ENCODE measurements at regions of chr12 and their contacts with region 1.

Region 1: DNA sequence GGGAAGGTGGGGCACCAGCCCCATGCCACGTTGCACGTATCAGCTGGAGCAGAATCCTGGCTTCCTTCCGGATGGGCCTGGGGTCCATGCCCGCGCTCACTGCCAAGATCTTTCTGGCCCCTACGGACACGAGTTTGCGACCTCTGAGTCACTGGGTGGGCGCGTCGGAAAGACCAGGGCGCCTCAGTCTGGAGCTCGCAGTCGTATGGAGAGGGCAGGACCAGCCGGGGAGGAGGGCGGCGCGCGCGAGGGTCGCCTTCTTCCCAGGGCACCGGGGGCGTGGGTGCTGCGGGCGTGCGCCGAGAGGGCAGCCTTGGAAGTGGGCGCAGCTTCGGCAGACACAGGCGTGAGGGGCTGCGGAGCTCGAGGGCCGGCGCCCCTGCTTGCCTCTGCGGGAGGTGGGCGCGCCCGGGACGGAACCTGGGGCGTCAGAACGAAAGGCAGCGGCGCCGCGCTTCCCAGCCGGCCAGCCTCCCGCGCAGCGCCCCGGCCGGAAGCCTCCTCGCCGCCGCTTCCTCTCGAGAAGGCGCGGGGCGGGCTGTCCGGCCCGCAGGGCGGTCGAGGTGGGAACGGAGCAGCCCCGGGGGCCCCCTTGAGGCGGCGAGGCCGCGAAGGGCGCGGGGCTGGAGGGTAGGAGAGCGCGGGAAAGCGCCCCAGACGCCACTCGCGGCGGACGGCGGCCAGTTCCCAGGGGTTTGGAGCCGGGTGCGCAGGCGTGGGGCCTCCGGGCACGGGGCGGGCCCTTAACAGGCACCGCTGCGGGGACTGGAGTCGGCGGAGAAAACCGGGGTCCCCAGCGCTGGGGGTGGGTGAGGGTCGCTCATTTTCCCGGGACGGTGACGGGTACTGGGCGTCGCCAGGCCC is at the start of gene ARL6IP4:
- DNase-seq: peak; percentile 73 to 82 (median 80)
- ATAC-seq: peak; percentile 86
- H3K4me3 ChIP-seq: peak within 1 kb of the TSS; percentile 95
- H3K4me1 ChIP-seq: peaks cover 36% of the 10 kb centered on the region
- CTCF ChIP-seq: no peak
- total RNA-seq, gene ARL6IP4: 127 to 171 (median 128) TPM

Region 2: GRCh38 chr12:123075646-123076171 is 95.3 kb after region 1 on chr12:
- intact Hi-C with region 1: no loop called
- DNase-seq: peak in 2 of 3 donors; percentile 49 to 76
- ATAC-seq: peak; percentile 80
- H3K4me3 ChIP-seq: no peak overlapping the region
- H3K4me1 ChIP-seq: peaks cover 5% of the 10 kb centered on the region
- CTCF ChIP-seq: no peak

Region 3: GRCh38 chr12:123141615-123142517 is 161.5 kb after region 1 on chr12:
- intact Hi-C with region 1: loop called in 1 of 2 experiments (anchors 10 kb)
- DNase-seq: peak; percentile 81 to 86 (median 84)
- ATAC-seq: peak; percentile 86
- H3K4me3 ChIP-seq: no peak overlapping the region
- H3K4me1 ChIP-seq: peaks cover 46% of the 10 kb centered on the region
- CTCF ChIP-seq: no peak

Measured in mucosa of descending colon (tissue), 3 donors.